ENCODE measurements at regions of chr7 and their contacts with region 1.

Region 1: GRCh38 chr7:23431702-23432199 is 38.5 kb downstream of the IGF2BP3 start:
- DNase-seq: peak; percentile 18
- H3K4me3 ChIP-seq: no peak overlapping the region
- H3K27ac ChIP-seq: peak overlapping the region; percentile 91
- H3K4me1 ChIP-seq: peaks cover 47% of the 10 kb centered on the region
- H3K27me3 ChIP-seq: no peaks in the 10 kb centered on the region
- CTCF ChIP-seq: no peak

Region 2: GRCh38 chr7:23261843-23262452 is 169.8 kb before region 1 on chr7:
- CTCF ChIA-PET with region 1: no interaction called
- POLR2A ChIA-PET with region 1: interaction called, 6 read pairs
- intact Hi-C with region 1: loop called (anchors 5 kb)
- DNase-seq: peak; percentile 80
- H3K4me3 ChIP-seq: no peak overlapping the region
- H3K27ac ChIP-seq: no peak overlapping the region
- H3K4me1 ChIP-seq: no peaks in the 10 kb centered on the region
- H3K27me3 ChIP-seq: no peaks in the 10 kb centered on the region
- CTCF ChIP-seq: peak; percentile 94

Region 3: DNA sequence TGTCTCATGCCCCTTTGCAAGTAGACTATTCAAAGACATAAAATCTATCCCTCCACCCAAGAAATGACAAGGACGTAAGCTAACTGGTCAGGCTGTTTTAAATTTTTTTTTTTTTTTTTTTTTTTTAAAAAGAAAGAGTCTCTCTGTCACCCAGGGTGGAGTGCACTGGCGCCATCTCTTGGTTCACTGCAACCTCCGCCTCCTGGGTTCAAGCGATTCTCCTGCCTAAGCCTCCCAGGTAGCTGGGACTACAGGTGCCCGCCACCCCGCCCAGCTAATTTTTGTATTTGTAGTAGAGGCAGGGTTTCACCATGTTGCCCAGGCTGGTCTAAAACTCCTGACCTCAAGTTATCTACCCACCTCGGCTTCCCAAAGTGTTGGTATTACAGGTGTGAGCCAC is 88.8 kb after region 1 on chr7:
- CTCF ChIA-PET with region 1: interaction called, 6 read pairs
- POLR2A ChIA-PET with region 1: no interaction called
- intact Hi-C with region 1: loop called (anchors 2 kb)
- DNase-seq: no peak
- H3K4me3 ChIP-seq: no peak overlapping the region
- H3K27ac ChIP-seq: no peak overlapping the region
- H3K4me1 ChIP-seq: peaks cover 17% of the 10 kb centered on the region
- H3K27me3 ChIP-seq: no peaks in the 10 kb centered on the region
- CTCF ChIP-seq: peak; percentile 48

Region 4: GRCh38 chr7:23531794-23532489 is 100.2 kb after region 1 on chr7 and contains the start of gene TRA2A:
- CTCF ChIA-PET with region 1: no interaction called
- POLR2A ChIA-PET with region 1: no interaction called
- intact Hi-C with region 1: loop called (anchors 2 kb)
- DNase-seq: peak; percentile 97
- H3K4me3 ChIP-seq: peak within 1 kb of the TSS; percentile 80
- H3K27ac ChIP-seq: peak within 1 kb of the TSS; percentile 99
- H3K4me1 ChIP-seq: peaks cover 31% of the 10 kb centered on the region
- H3K27me3 ChIP-seq: no peaks in the 10 kb centered on the region
- CTCF ChIP-seq: no peak
- total RNA-seq, gene TRA2A: 114 and 116 TPM in 2 replicates